Right ventricle myocardium inferior (tissue), 1 donor: ENCODE measurements at regions of chr1 and their contacts with region 1.

Region 1: DNA sequence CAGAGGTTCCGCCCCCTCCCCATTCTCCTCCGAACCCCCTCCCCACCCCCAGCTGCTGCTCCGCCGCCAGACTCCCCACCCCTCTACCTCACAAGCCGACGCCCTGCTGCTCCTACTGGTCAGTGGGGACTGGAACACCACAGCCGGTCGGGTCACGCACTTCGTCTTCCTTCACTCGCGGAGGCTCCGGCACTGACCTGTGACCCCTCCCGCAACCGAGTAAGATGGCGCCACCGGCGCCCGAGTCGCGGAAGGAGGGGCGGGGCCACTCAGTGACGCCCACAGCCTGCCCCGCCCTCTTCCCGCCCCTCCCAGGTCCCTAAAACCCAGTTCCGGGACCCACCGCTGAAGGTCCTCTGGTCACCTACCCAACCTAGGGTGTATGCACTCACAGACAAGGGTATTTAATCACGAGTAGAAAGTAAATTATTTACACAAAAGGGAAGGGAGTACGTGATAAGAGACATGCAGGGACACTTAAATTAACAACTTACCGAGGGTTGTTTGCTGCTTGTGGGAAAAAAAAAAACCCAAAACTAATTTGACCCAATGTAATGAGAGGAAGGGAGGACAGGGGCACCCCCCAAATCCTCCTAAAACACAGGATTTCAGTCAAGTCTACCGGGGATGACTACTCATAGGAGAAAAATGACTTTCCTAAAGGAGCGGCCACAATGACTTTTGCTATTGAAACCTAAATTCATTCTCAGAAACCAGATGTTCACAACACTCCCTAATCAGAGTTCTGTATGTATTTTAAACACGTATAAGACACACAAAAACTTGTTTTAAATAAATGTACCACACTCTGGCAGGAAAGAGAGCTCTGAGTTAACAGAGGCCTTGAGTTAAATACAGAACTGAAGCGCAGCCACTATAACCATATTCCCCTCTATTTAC is at the start of gene RIT1:
- DNase-seq: peak; percentile 95
- ATAC-seq: peak; percentile 98
- total RNA-seq, gene RIT1: 21.7 TPM

Region 2: GRCh38 chr1:155816351-155816750 is 95.1 kb before region 1 on chr1:
- intact Hi-C with region 1: loop called (anchors 10 kb)
- DNase-seq: no peak
- ATAC-seq: no peak

Region 3: DNA sequence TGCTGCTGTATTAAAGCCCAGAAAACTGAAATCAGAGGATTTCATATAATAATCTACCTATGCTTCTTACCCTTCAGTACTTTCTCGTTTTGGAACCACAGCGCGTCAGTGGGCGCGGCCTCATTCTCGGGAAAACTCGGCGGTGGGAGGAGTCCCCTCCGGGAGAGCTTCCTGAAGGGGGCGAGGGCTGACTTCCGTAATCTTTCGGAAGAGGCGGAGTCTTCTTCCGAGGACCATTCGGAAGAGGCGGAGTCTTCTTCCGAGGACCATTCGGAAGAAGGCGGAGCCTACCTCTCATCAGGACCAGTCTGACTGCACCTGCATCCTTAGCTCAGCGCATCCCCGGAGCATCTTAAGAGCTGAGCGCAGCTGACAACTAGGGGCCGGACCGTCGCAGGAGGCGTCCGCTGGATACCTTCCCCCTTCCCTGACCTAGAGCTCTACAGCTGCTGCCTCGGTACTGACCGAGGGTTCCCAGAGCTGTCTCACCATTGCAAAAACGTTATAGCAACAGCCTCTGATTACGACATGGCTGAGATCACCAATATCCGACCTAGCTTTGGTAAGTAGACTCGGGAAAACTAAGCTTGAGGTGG is 52.1 kb before region 1 on chr1 and contains the start of gene SYT11:
- intact Hi-C with region 1: loop called (anchors 5 kb)
- DNase-seq: peak; percentile 96
- ATAC-seq: peak; percentile 91
- total RNA-seq, gene SYT11: 9.2 TPM

Region 4: DNA sequence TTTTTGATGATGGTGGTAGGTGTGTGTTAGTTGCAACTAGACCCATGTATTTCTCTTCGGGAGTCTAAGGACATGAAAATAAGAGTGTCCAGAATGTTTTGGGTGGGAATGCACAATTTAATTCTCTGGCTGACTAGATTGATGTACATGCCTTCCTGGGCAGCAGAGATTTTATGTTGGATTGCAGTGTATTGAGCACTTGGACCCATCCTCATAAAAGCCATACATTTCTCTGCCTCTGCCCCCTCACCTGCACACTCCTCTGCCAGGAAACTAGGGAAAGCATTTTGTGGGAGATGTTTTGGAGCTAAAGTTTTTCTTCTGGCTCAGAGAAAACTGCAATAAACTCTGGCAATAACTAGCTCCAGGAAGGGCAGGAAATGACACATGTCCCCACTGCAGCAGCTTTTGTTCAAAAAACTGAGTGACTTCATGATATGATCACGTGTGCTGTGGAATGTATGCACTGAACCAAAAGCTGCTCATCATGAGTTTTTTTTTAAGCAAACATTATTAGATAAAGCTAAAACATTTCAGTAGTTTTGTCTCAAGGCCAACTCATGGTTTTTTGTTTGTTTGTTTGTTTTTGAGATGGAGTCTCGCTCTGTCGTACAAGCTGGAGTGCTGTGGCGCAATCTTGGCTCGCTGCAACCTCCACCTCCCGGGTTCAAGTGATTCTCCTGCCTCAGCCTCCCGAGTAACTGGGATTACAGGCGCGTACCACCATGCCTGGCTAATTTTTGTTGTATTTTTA is 17.8 kb before region 1 on chr1:
- intact Hi-C with region 1: no loop called
- DNase-seq: no peak
- ATAC-seq: no peak